Uterus (tissue), 4 donors: ENCODE measurements at regions of chr17 and their contacts with region 1.

Region 1: DNA sequence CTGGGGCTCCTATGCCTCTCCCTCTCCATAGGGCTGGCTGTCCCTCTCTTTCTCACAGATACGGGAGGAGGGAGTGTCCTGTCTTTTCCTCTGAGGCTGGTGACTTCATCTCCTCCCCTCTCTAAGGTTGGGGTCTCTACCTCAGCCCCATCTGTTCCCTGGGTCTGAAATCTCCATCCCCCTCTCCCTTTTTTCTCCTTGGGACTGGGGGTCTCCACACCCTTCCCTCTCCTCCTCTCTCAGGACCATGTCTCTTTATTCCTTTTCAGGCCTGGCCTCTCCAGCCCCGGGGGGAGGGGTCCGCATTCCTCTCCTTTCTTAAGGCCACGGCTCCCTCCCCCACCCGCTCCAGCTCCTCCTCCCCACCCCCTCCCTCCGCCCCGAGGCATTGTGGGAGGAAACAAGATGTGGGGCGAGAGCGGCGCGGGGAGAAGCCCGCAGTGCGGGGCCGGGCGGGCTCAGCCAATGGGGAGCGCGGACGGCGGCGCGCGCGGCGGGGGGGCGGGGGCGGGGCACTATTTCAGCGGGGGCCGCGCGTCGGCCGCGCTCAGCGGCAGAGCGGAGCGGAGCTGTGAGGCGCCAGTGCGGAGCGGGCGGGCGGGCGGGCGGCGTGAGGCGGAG is at the start of gene DYNLL2:
- DNase-seq: peak; percentile 91
- H3K4me3 ChIP-seq: peak within 1 kb of the TSS; percentile 70 to 79
- H3K27ac ChIP-seq: peak within 1 kb of the TSS; percentile 89 to 92
- H3K4me1 ChIP-seq: peaks cover 0 to 8% of the 10 kb centered on the region in 2 donors
- H3K27me3 ChIP-seq: no peaks in the 10 kb centered on the region
- CTCF ChIP-seq: no peak
- POLR2A ChIP-seq: no peak
- total RNA-seq, gene DYNLL2: 6.1 to 37.8 (median 23.2) TPM

Region 2: GRCh38 chr17:57868007-57868909 is 214.7 kb before region 1 on chr17:
- intact Hi-C with region 1: loop called (anchors 10 kb)
- DNase-seq: peak; percentile 92 to 93
- H3K4me3 ChIP-seq: no peak overlapping the region
- H3K27ac ChIP-seq: peak overlapping the region; percentile 77 to 93
- H3K4me1 ChIP-seq: peaks cover 8 to 13% of the 10 kb centered on the region in 2 donors
- H3K27me3 ChIP-seq: no peaks in the 10 kb centered on the region
- CTCF ChIP-seq: peak; percentile 32 to 68 (median 49)
- POLR2A ChIP-seq: no peak